ENCODE measurements at regions of chr19 and their contacts with region 1.

Region 1: GRCh38 chr19:36687214-36688056 is at the start of gene ZNF567:
- DNase-seq: peak; percentile 98 to 99 (median 99)
- H3K4me3 ChIP-seq: peak within 1 kb of the TSS; percentile 46 to 96 (median 74)
- H3K27ac ChIP-seq: peak within 1 kb of the TSS; percentile 14 to 87 (median 61)
- H3K4me1 ChIP-seq: peaks cover 9 to 22% of the 10 kb centered on the region in 2 donors
- H3K27me3 ChIP-seq: no peaks in the 10 kb centered on the region
- CTCF ChIP-seq: peak in 1 of 6 experiments; percentile 16
- POLR2A ChIP-seq: peak; percentile 44 to 94
- total RNA-seq, gene ZNF567: 3.4 to 8.2 (median 5.2) TPM

Region 2: GRCh38 chr19:36772311-36773222 is 85.1 kb after region 1 on chr19 and contains the start of gene ZNF850:
- intact Hi-C with region 1: loop called in 1 of 2 experiments (anchors 10 kb)
- DNase-seq: peak; percentile 96 to 98 (median 97)
- H3K4me3 ChIP-seq: peak within 1 kb of the TSS; percentile 55 to 96 (median 83)
- H3K27ac ChIP-seq: peak within 1 kb of the TSS; percentile 73 to 88 (median 81)
- H3K4me1 ChIP-seq: peaks cover 0 to 14% of the 10 kb centered on the region in 2 donors
- H3K27me3 ChIP-seq: no peaks in the 10 kb centered on the region
- CTCF ChIP-seq: no peak
- POLR2A ChIP-seq: peak in 1 of 2 donors; percentile 77
- total RNA-seq, gene ZNF850: 2.0 to 11.8 (median 4.0) TPM

Region 3: DNA sequence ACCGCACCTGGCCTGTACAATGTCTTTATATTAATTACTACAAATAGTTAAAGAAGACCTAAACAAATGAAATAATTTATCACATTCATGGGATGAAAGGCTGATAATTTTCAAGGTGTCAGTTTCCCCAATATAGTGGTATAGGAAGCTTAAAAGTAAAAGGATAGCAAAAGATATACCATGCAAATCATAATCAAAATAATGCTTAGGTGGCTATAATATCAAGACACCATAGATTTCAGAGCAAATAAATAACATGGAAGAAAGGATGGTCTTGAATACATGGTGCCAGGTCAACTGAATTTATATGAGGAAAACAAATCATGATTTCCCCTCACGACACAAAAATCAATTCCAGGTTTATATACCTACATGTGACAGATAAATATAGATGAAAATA is 146.0 kb after region 1 on chr19:
- intact Hi-C with region 1: no loop called
- DNase-seq: no peak
- H3K4me3 ChIP-seq: no peak overlapping the region
- H3K27ac ChIP-seq: no peak overlapping the region
- H3K4me1 ChIP-seq: peaks cover 0 to 7% of the 10 kb centered on the region in 2 donors
- H3K27me3 ChIP-seq: no peaks in the 10 kb centered on the region
- CTCF ChIP-seq: no peak
- POLR2A ChIP-seq: no peak